CD8-positive, alpha-beta memory T cell (primary cell): ENCODE measurements at regions of chr17 and their contacts with region 1.

Region 1: GRCh38 chr17:77429919-77430752 is 289.4 kb downstream of the SEC14L1 start:
- DNase-seq: peak; percentile 70 to 86 (median 74)
- H3K4me3 ChIP-seq: no peak overlapping the region
- H3K4me3 Mint-ChIP-seq: peak overlapping the region in 2 of 7 donors; percentile 8 to 27
- H3K27ac ChIP-seq: no peak overlapping the region
- H3K27ac Mint-ChIP-seq: peak overlapping the region; percentile 29 to 89 (median 72)
- H3K4me1 ChIP-seq: peaks cover 99% of the 10 kb centered on the region
- H3K4me1 Mint-ChIP-seq: peaks cover 70 to 98% (median 80%) of the 10 kb centered on the region in 3 donors
- H3K27me3 ChIP-seq: no peaks in the 10 kb centered on the region
- H3K27me3 Mint-ChIP-seq: no peaks in the 10 kb centered on the region

Region 2: DNA sequence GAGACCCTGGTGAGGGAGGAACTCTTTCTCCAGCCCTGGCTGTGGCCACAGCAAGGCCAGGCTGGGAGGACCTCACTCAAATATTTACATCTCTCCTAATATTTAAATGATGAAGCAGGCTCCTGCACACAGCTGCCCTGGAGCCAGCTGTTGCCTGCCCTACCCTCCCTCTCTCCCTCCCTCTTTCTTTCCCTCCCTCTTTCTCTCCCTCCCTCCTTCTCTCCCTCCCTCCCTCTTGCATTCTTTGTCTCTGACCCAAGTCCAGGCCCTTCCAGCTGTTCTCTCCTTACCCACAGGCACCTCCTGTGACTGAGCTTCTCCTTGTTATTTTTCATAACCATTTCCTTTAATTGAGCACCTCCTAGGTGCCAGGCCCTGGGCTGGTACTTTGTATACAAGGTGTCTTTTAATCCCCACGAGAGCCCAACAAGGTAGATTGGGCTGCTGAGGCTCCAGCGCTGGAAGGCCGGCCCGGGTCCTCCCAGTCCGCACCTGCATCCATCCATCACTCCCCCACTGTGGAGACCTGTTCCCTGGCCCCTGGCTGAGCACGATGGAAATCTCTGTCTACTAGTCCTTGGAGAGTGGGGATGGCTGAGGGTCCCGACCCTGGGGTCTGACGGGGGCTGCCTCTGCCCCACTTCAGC is 47.0 kb before region 1 on chr17:
- CTCF ChIA-PET with region 1: interaction called, 17 read pairs
- POLR2A ChIA-PET with region 1: interaction called, 4 read pairs
- DNase-seq: no peak
- H3K4me3 ChIP-seq: peak overlapping the region; percentile 62
- H3K4me3 Mint-ChIP-seq: peak overlapping the region; percentile 32 to 91 (median 78)
- H3K27ac ChIP-seq: no peak overlapping the region
- H3K27ac Mint-ChIP-seq: peak overlapping the region; percentile 87 to 96 (median 91)
- H3K4me1 ChIP-seq: peaks cover 94% of the 10 kb centered on the region
- H3K4me1 Mint-ChIP-seq: peaks cover 81 to 95% (median 88%) of the 10 kb centered on the region in 3 donors
- H3K27me3 ChIP-seq: no peaks in the 10 kb centered on the region
- H3K27me3 Mint-ChIP-seq: no peaks in the 10 kb centered on the region

Region 3: DNA sequence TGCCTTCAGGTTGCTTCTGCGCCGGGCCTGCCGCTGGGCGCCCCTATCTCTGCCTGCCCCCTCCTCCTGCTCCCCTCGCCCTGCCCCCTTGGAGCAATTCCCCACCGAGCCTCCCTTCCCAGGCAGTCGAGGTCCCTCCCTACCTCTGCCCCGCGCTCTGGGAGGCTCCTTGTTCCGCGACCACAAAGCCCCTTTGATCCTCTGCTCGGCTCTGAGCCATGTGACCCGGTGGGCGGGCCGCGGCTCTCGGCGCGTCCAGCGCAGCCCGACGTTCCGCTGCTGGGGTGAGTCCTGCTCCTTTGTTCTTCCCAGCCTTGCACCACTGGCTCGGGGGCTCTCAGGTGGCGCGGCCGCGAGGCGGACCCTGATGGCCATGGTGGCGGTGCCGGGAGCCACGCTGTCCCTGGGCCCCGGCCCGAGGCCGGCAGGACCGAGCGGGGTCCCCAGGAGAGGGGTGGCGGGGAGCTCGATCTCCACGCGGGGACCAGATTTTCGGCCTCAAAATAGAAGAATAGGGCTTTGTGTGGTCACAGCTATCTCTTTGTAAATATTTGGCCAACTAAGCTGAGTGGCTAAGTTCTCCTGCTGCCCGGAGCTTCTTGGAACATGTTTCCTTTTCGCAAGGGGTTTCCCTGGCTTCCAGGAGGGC is 21.2 kb after region 1 on chr17:
- CTCF ChIA-PET with region 1: interaction called, 21 read pairs
- POLR2A ChIA-PET with region 1: interaction called, 5 read pairs
- DNase-seq: peak; percentile 60 to 80 (median 71)
- H3K4me3 ChIP-seq: peak overlapping the region; percentile 95
- H3K4me3 Mint-ChIP-seq: peak overlapping the region; percentile 89 to 99 (median 98)
- H3K27ac ChIP-seq: peak overlapping the region; percentile 77
- H3K27ac Mint-ChIP-seq: peak overlapping the region; percentile 85 to 100 (median 97)
- H3K4me1 ChIP-seq: peaks cover 57% of the 10 kb centered on the region
- H3K4me1 Mint-ChIP-seq: peaks cover 50 to 61% (median 59%) of the 10 kb centered on the region in 3 donors
- H3K27me3 ChIP-seq: no peaks in the 10 kb centered on the region
- H3K27me3 Mint-ChIP-seq: no peaks in the 10 kb centered on the region

Region 4: DNA sequence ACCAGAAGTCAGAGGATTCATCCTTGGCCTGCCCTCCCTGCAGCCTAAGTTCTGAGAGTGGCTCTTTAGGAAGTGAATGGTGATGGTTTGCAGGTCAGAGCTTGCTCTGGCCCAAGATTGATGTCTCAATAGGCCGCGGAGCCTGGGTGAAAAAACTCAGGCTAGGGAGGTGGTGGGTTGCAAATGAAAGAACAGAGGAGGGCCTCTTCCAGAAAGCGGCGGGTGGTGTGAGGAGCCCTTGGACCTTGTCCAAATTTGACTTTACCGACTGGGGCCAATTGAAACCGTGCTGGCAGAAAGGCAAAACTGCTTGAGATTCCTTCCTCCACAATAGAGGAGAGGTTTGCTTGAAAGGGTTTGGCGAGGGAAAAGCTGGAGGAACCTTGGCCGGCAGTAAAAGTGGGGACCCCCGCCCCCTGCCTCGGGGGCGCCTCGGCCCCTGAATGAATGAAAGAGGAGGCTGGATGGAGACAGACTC is 41.9 kb after region 1 on chr17:
- CTCF ChIA-PET with region 1: interaction called, 22 read pairs
- POLR2A ChIA-PET with region 1: interaction called, 4 read pairs
- DNase-seq: no peak
- H3K4me3 ChIP-seq: peak overlapping the region; percentile 35
- H3K4me3 Mint-ChIP-seq: peak overlapping the region; percentile 7 to 92 (median 64)
- H3K27ac ChIP-seq: peak overlapping the region; percentile 12
- H3K27ac Mint-ChIP-seq: peak overlapping the region; percentile 67 to 96 (median 86)
- H3K4me1 ChIP-seq: peaks cover 98% of the 10 kb centered on the region
- H3K4me1 Mint-ChIP-seq: peaks cover 91 to 99% (median 92%) of the 10 kb centered on the region in 3 donors
- H3K27me3 ChIP-seq: no peaks in the 10 kb centered on the region
- H3K27me3 Mint-ChIP-seq: no peaks in the 10 kb centered on the region

Region 5: GRCh38 chr17:77581480-77581879 is 151.3 kb after region 1 on chr17:
- CTCF ChIA-PET with region 1: no interaction called
- POLR2A ChIA-PET with region 1: no interaction called
- DNase-seq: no peak
- H3K4me3 ChIP-seq: no peak overlapping the region
- H3K4me3 Mint-ChIP-seq: no peak overlapping the region
- H3K27ac ChIP-seq: no peak overlapping the region
- H3K27ac Mint-ChIP-seq: peak overlapping the region in 1 of 8 donors; percentile 70
- H3K4me1 ChIP-seq: no peaks in the 10 kb centered on the region
- H3K4me1 Mint-ChIP-seq: peaks cover 0 to 4% (median 3%) of the 10 kb centered on the region in 3 donors
- H3K27me3 ChIP-seq: no peaks in the 10 kb centered on the region
- H3K27me3 Mint-ChIP-seq: peaks cover 1 to 19% of the 10 kb centered on the region in 2 donors